IMR-90 (cell line): ENCODE measurements at regions of chr11 and their contacts with region 1.

Region 1: GRCh38 chr11:58958500-58958899 is 19.2 kb downstream of the GLYATL1 start:
- DNase-seq: no peak
- ATAC-seq: no peak
- H3K4me3 ChIP-seq: no peak overlapping the region
- H3K27ac ChIP-seq: no peak overlapping the region
- H3K4me1 ChIP-seq: no peaks in the 10 kb centered on the region
- H3K27me3 ChIP-seq: peaks cover 1% of the 10 kb centered on the region; the same call in 1 of the 2 replicates
- CTCF ChIP-seq: peak; percentile 28
- POLR2A ChIP-seq: no peak
- RAD21 ChIP-seq: no peak

Region 2: DNA sequence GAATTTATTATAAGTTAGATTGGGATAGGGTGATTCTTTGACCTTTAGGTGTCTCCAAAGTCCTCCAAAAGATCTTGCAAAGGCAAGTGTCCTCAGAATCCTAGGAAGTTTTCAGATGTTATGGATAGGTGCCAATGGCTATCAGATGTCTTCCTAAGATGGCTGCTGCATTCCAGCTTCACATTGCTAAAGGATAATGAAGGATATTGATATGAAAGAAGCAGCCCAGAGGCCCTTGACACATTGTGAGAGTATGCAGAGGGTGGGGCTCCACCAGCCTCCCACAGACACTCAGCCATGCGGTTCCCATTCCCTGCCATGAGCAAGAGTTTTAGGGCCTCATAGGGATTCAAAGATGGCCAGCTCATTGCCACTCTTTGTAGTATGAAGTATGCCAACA is 91.7 kb before region 1 on chr11:
- CTCF ChIA-PET with region 1: interaction called, 3 read pairs
- POLR2A ChIA-PET with region 1: no interaction called
- dilution Hi-C with region 1: no loop called
- in situ Hi-C with region 1: loop called (anchors 25 kb)
- intact Hi-C with region 1: no loop called
- DNase-seq: peak; percentile 49
- ATAC-seq: peak; percentile 17; the same call in 1 of the 2 replicates
- H3K4me3 ChIP-seq: no peak overlapping the region
- H3K27ac ChIP-seq: no peak overlapping the region
- H3K4me1 ChIP-seq: no peaks in the 10 kb centered on the region
- H3K27me3 ChIP-seq: no peaks in the 10 kb centered on the region
- CTCF ChIP-seq: no peak
- POLR2A ChIP-seq: no peak
- RAD21 ChIP-seq: no peak

Region 3: DNA sequence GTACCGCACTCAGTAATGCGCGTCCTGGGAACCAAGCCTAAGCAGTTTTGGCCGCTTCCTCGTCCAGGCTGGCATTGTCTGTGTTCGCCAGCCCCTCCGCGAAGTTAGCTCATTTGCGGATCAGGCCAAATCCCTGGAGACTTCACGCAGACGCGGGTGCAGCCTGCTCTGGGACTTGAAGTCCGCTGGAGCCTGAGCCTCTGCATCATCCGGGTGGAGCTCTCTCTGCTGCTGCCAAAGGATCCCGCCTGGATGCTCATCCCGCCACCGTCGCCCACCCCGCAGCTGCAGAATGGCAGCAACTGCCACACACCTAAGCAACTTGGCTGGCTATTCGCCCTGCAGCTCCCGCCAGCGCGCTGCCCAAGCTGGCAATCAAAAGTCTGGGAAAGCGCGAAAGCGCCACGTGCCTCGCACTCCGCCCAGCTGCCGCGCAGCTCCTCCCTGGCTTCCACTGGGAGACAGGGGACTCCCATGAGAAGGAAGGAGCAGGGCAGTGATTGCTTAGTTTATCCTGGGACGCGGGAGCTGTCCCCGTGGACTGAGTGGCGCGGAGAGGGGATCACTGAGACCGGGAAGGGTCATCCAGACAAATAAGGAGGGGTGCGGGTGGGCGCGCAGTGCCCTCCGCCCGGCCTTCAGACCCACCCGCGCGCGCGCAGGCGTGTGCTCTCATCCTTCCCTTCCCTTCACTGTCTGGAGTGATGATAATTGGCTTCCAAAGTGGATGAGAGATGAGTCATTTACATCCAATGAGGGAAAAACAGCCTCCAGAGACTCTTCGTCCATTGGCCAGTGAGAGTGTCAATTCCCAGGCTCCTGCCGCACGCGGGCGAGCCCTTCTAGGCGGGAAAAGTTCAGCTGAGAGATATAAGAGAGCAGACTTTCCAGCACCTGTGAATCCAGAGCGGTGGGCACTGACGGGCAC is 104.4 kb after region 1 on chr11:
- CTCF ChIA-PET with region 1: no interaction called
- POLR2A ChIA-PET with region 1: no interaction called
- dilution Hi-C with region 1: no loop called
- in situ Hi-C with region 1: no loop called
- intact Hi-C with region 1: no loop called
- DNase-seq: no peak
- ATAC-seq: no peak
- H3K4me3 ChIP-seq: no peak overlapping the region
- H3K27ac ChIP-seq: no peak overlapping the region
- H3K4me1 ChIP-seq: no peaks in the 10 kb centered on the region
- H3K27me3 ChIP-seq: peaks cover 24% of the 10 kb centered on the region
- CTCF ChIP-seq: no peak
- POLR2A ChIP-seq: no peak
- RAD21 ChIP-seq: no peak